Breast epithelium (tissue), 4 donors: ENCODE measurements at regions of chr1 and their contacts with region 1.

Region 1: GRCh38 chr1:91282695-91283420 is 121.8 kb downstream of the HFM1 start:
- DNase-seq: no peak
- H3K4me3 ChIP-seq: peak overlapping the region in 1 of 3 donors; percentile 35
- H3K27ac ChIP-seq: no peak overlapping the region
- H3K4me1 ChIP-seq: no peaks in the 10 kb centered on the region
- H3K27me3 ChIP-seq: no peaks in the 10 kb centered on the region
- CTCF ChIP-seq: peak; percentile 71 to 81 (median 76)
- POLR2A ChIP-seq: no peak

Region 2: GRCh38 chr1:91261655-91262054 is 21.2 kb before region 1 on chr1:
- intact Hi-C with region 1: no loop called
- DNase-seq: no peak
- H3K4me3 ChIP-seq: no peak overlapping the region
- H3K27ac ChIP-seq: no peak overlapping the region
- H3K4me1 ChIP-seq: no peaks in the 10 kb centered on the region
- H3K27me3 ChIP-seq: no peaks in the 10 kb centered on the region
- CTCF ChIP-seq: no peak
- POLR2A ChIP-seq: no peak

Region 3: GRCh38 chr1:91924146-91924545 is 641.3 kb after region 1 on chr1:
- intact Hi-C with region 1: loop called (anchors 10 kb)
- DNase-seq: no peak
- H3K4me3 ChIP-seq: no peak overlapping the region
- H3K27ac ChIP-seq: no peak overlapping the region
- H3K4me1 ChIP-seq: no peaks in the 10 kb centered on the region
- H3K27me3 ChIP-seq: no peaks in the 10 kb centered on the region
- CTCF ChIP-seq: no peak
- POLR2A ChIP-seq: no peak